SK-N-SH (cell line): ENCODE measurements at regions of chr7 and their contacts with region 1.

Region 1: GRCh38 chr7:1473864-1474512 is 14.7 kb upstream of the MICALL2 start:
- DNase-seq: peak; percentile 97
- H3K4me3 ChIP-seq: no peak overlapping the region; a peak in 1 of 4 replicates
- H3K27ac ChIP-seq: no peak overlapping the region; a peak in 1 of 4 replicates
- H3K4me1 ChIP-seq: no peaks in the 10 kb centered on the region; a peak in 1 of 4 replicates
- H3K27me3 ChIP-seq: no peaks in the 10 kb centered on the region
- CTCF ChIP-seq: peak; percentile 93
- EP300 ChIP-seq: no peak
- RAD21 ChIP-seq: peak; percentile 80

Region 2: GRCh38 chr7:1193593-1194424 is 280.2 kb before region 1 on chr7:
- CTCF ChIA-PET with region 1: interaction called, 25 read pairs
- POLR2A ChIA-PET with region 1: no interaction called
- DNase-seq: peak; percentile 90
- H3K4me3 ChIP-seq: no peak overlapping the region
- H3K27ac ChIP-seq: no peak overlapping the region
- H3K4me1 ChIP-seq: peaks cover 0 to 3% of the 10 kb centered on the region in 2 experiments; a peak in 1 of 4 replicates
- H3K27me3 ChIP-seq: peaks cover 29% of the 10 kb centered on the region; the same call in 1 of the 2 replicates
- CTCF ChIP-seq: peak; percentile 75
- EP300 ChIP-seq: no peak
- RAD21 ChIP-seq: peak; percentile 90

Region 3: GRCh38 chr7:1447551-1448244 is 26.3 kb before region 1 on chr7:
- CTCF ChIA-PET with region 1: interaction called, 43 read pairs
- POLR2A ChIA-PET with region 1: no interaction called
- DNase-seq: no peak
- H3K4me3 ChIP-seq: no peak overlapping the region
- H3K27ac ChIP-seq: no peak overlapping the region
- H3K4me1 ChIP-seq: peaks cover 0 to 1% of the 10 kb centered on the region in 2 experiments; a peak in 1 of 4 replicates
- H3K27me3 ChIP-seq: no peaks in the 10 kb centered on the region
- CTCF ChIP-seq: no peak
- EP300 ChIP-seq: no peak
- RAD21 ChIP-seq: no peak

Region 4: GRCh38 chr7:1484569-1484968 is 10.6 kb after region 1 on chr7:
- CTCF ChIA-PET with region 1: interaction called, 104 read pairs
- POLR2A ChIA-PET with region 1: interaction called, 6 read pairs
- DNase-seq: no peak
- H3K4me3 ChIP-seq: no peak overlapping the region
- H3K27ac ChIP-seq: no peak overlapping the region
- H3K4me1 ChIP-seq: no peaks in the 10 kb centered on the region
- H3K27me3 ChIP-seq: no peaks in the 10 kb centered on the region
- CTCF ChIP-seq: no peak
- EP300 ChIP-seq: no peak
- RAD21 ChIP-seq: no peak

Region 5: GRCh38 chr7:1503816-1504775 is 30.1 kb after region 1 on chr7 and contains the start of gene INTS1:
- CTCF ChIA-PET with region 1: interaction called, 31 read pairs
- POLR2A ChIA-PET with region 1: no interaction called
- DNase-seq: peak; percentile 100
- H3K4me3 ChIP-seq: peak within 1 kb of the TSS; percentile 87 to 96
- H3K27ac ChIP-seq: peak within 1 kb of the TSS; percentile 50 to 72; a peak in 2 of 4 replicates
- H3K4me1 ChIP-seq: peaks cover 5 to 29% of the 10 kb centered on the region in 2 experiments; a peak in 2 of 4 replicates
- H3K27me3 ChIP-seq: no peaks in the 10 kb centered on the region
- CTCF ChIP-seq: peak; percentile 93
- EP300 ChIP-seq: peak; percentile 24 to 66; a peak in 2 of 4 replicates
- RAD21 ChIP-seq: peak; percentile 32; the same call in 1 of the 2 replicates
- polyA plus RNA-seq, gene INTS1: 35.7 and 48.1 TPM in 2 replicates